Activated CD4-positive, alpha-beta T cell treated with anti-CD3 and anti-CD28 coated beads, Interleukin-2, amount 10 ng/mL, durations not matched to agents 24 days and 14 days (primary cell): ENCODE measurements at regions of chrX and their contacts with region 1.

Region 1: GRCh38 chrX:72245461-72246089 is 6.7 kb upstream of the ERCC6L start:
- DNase-seq: peak; percentile 80
- H3K4me3 Mint-ChIP-seq: no peak overlapping the region
- H3K27ac Mint-ChIP-seq: no peak overlapping the region
- H3K4me1 Mint-ChIP-seq: peaks cover 2% of the 10 kb centered on the region
- H3K27me3 Mint-ChIP-seq: no peaks in the 10 kb centered on the region

Region 2: GRCh38 chrX:71679575-71680207 is 565.9 kb before region 1 on chrX:
- intact Hi-C with region 1: no loop called
- DNase-seq: peak; percentile 18
- H3K4me3 Mint-ChIP-seq: no peak overlapping the region
- H3K27ac Mint-ChIP-seq: no peak overlapping the region
- H3K4me1 Mint-ChIP-seq: no peaks in the 10 kb centered on the region
- H3K27me3 Mint-ChIP-seq: peaks cover 15% of the 10 kb centered on the region

Region 3: GRCh38 chrX:72230290-72230689 is 15.3 kb before region 1 on chrX:
- intact Hi-C with region 1: no loop called
- DNase-seq: no peak
- H3K4me3 Mint-ChIP-seq: no peak overlapping the region
- H3K27ac Mint-ChIP-seq: no peak overlapping the region
- H3K4me1 Mint-ChIP-seq: peaks cover 8% of the 10 kb centered on the region
- H3K27me3 Mint-ChIP-seq: no peaks in the 10 kb centered on the region

Region 4: DNA sequence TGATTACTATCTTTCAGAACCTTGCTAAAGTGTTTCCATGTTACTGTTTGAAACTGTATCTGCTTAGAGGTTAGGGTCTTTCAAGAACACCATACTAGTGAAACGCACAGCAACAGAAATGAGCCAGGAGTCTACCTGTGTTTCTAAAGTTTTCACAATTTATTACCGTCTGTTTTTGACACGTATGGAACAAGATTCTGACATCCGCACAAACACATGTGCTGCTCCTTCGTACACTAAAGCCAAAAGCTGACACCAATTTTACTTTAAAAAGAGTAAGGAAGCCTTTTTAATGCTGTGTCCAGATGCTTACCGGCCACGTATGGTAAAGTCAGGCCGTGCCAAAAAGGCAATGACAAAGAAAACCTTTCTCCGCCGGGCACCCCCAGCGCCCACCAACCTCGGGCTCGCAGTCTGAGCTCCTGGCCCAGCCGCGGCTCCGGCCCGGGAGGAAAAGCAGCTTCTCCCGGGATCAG is 30.9 kb after region 1 on chrX:
- intact Hi-C with region 1: loop called (anchors 2 kb)
- DNase-seq: no peak
- H3K4me3 Mint-ChIP-seq: peak overlapping the region; percentile 85
- H3K27ac Mint-ChIP-seq: peak overlapping the region; percentile 86
- H3K4me1 Mint-ChIP-seq: peaks cover 30% of the 10 kb centered on the region
- H3K27me3 Mint-ChIP-seq: peaks cover 10% of the 10 kb centered on the region

Region 5: GRCh38 chrX:72540318-72540717 is 294.7 kb after region 1 on chrX:
- intact Hi-C with region 1: loop called (anchors 1 kb)
- DNase-seq: no peak
- H3K4me3 Mint-ChIP-seq: no peak overlapping the region
- H3K27ac Mint-ChIP-seq: no peak overlapping the region
- H3K4me1 Mint-ChIP-seq: peaks cover 1% of the 10 kb centered on the region
- H3K27me3 Mint-ChIP-seq: no peaks in the 10 kb centered on the region